Psoas muscle (tissue), 8 donors: ENCODE measurements at regions of chr11 and their contacts with region 1.

Region 1: GRCh38 chr11:19253153-19253745 is 12.5 kb upstream of the E2F8 start:
- DNase-seq: no peak
- ATAC-seq: no peak
- H3K4me3 ChIP-seq: no peak overlapping the region
- H3K27ac ChIP-seq: no peak overlapping the region
- H3K4me1 ChIP-seq: no peaks in the 10 kb centered on the region
- H3K27me3 ChIP-seq: no peaks in the 10 kb centered on the region
- CTCF ChIP-seq: no peak

Region 2: DNA sequence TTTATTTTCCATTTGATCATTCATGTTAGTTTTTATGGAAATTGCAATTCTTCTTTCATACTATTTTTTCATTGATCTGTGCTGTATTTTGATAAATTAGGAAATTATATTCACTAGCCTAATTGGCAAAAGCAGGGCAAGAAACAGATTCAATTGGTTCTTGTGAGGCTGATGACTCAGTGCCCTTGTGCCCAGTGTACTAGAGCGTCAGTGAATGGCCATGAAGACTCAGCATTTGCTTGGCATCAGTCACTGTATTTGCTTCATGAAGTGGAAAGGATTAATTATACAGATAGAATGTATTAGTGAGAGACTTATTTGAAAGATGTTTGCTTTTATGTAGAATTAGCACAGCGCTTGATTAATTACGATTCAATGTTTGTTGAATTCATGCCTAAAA is 345.9 kb before region 1 on chr11:
- intact Hi-C with region 1: no loop called
- DNase-seq: no peak
- ATAC-seq: no peak
- H3K4me3 ChIP-seq: no peak overlapping the region
- H3K27ac ChIP-seq: no peak overlapping the region
- H3K4me1 ChIP-seq: no peaks in the 10 kb centered on the region
- H3K27me3 ChIP-seq: no peaks in the 10 kb centered on the region
- CTCF ChIP-seq: no peak

Region 3: DNA sequence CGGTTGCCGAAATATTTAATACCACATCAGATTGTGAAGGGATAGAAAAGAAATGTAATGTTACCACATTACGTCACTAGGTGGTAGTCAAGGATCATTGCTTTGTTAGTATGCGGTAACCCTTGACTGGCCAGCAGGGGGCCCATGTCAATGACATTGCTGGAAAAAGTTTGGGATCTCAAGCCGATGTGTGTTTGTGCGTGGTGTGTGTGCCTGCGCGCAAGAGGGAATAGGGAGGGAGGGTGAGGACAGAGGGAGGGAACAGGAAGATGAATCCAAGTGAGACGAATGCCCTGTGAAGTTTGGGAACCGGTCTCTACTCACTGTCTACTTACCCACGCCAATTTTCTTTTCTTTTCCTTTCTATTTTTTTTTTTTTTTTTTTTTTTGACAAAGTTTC is 182.0 kb before region 1 on chr11:
- intact Hi-C with region 1: loop called in 1 of 2 experiments (anchors 5 kb)
- DNase-seq: peak; percentile 65 to 77
- ATAC-seq: peak; percentile 88 to 97 (median 94)
- H3K4me3 ChIP-seq: no peak overlapping the region
- H3K27ac ChIP-seq: no peak overlapping the region
- H3K4me1 ChIP-seq: no peaks in the 10 kb centered on the region
- H3K27me3 ChIP-seq: no peaks in the 10 kb centered on the region
- CTCF ChIP-seq: peak; percentile 90

Region 4: DNA sequence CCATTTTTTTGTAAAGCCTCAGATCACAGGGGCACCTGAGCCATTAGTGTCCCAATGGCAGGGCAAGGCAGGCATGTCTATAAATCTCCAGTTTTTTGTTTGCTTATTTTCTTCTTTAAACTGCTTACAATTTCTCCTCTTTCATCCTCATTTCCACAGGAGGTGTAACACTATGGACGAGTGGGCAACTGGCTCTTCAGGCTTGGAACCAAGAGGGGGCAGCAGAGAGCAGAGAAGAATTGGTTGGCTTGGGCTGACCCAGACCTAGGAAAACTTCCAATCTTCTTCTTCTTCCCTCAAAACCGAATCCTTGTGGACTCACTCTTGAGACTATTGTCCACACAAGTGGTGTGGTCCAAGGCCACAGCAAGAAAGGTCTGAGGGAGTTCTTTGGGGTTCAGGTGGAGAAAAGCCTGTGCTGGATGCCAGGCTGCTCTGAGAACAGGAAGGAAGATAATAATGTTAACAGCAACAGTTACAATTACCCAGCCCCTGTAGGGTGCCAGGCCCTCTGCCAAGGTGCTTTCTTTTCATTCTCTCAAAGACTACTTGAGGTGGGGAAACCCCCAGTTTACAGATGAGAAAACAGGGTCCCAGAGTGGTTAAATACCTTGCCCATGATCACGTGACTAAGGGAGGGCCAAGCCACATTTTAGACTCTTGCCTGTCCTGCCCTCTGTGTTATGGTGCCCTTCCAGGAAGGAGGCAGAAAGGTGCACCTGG is 58.2 kb after region 1 on chr11:
- intact Hi-C with region 1: no loop called
- DNase-seq: peak; percentile 62 to 63
- ATAC-seq: peak; percentile 65 to 83 (median 82)
- H3K4me3 ChIP-seq: no peak overlapping the region
- H3K27ac ChIP-seq: no peak overlapping the region
- H3K4me1 ChIP-seq: no peaks in the 10 kb centered on the region
- H3K27me3 ChIP-seq: no peaks in the 10 kb centered on the region
- CTCF ChIP-seq: peak; percentile 74